Esophagus muscularis mucosa (tissue), 4 donors: ENCODE measurements at regions of chr2 and their contacts with region 1.

Region 1: GRCh38 chr2:168455648-168456520 is at the start of gene CERS6:
- DNase-seq: peak; percentile 98
- H3K4me3 ChIP-seq: peak within 1 kb of the TSS; percentile 77 to 99 (median 79)
- H3K27ac ChIP-seq: peak within 1 kb of the TSS; percentile 81 to 90 (median 88)
- H3K4me1 ChIP-seq: peaks cover 12 to 36% (median 31%) of the 10 kb centered on the region in 4 donors
- H3K27me3 ChIP-seq: no peaks in the 10 kb centered on the region
- CTCF ChIP-seq: peak in 2 of 3 experiments; percentile 3 to 12
- EP300 ChIP-seq: no peak
- POLR2A ChIP-seq: peak; percentile 74
- total RNA-seq, gene CERS6: 46.6 to 67.7 (median 53.6) TPM

Region 2: DNA sequence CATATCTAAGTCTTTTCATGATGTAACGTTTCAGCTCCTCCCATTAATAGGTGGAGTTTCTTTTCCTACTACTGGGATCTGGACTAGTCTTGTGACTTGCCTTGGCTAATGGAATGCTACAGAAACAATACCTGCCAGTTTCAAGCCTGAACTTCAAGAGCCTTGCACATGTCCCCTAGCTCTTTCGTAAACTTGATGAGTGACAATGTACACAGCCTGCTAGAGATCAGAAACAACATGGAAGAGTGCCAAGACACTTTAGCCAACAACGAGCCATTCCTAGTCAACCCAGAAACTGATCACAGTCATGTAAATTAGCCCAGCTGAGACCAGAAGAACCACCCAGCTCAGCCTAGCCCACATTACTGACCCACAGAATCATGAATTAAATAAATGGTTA is 183.7 kb before region 1 on chr2:
- intact Hi-C with region 1: no loop called
- DNase-seq: no peak
- H3K4me3 ChIP-seq: no peak overlapping the region
- H3K27ac ChIP-seq: no peak overlapping the region
- H3K4me1 ChIP-seq: no peaks in the 10 kb centered on the region
- H3K27me3 ChIP-seq: no peaks in the 10 kb centered on the region
- CTCF ChIP-seq: no peak
- EP300 ChIP-seq: no peak
- POLR2A ChIP-seq: no peak

Region 3: DNA sequence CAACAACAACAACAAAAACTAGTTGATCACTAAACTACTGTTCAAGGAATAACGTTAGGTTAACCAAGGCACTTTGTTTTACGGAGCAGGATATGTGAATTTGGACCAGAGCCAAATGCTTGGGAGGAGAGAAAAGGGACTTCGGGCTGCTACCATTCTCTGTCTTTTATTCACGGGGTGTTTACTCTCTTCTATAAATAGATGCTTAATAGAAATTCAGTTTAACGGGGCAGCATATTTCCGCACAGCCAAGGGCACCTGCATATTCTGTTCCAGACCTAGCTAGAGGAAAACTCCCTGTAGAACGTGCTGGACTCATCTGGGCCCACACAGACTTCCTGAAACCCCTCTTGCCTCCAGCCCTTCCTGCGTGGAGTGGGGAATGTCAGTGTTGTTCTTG is 172.7 kb before region 1 on chr2:
- intact Hi-C with region 1: no loop called
- DNase-seq: no peak
- H3K4me3 ChIP-seq: no peak overlapping the region
- H3K27ac ChIP-seq: no peak overlapping the region
- H3K4me1 ChIP-seq: peaks cover 0 to 7% (median 6%) of the 10 kb centered on the region in 4 donors
- H3K27me3 ChIP-seq: no peaks in the 10 kb centered on the region
- CTCF ChIP-seq: no peak
- EP300 ChIP-seq: no peak
- POLR2A ChIP-seq: no peak

Region 4: DNA sequence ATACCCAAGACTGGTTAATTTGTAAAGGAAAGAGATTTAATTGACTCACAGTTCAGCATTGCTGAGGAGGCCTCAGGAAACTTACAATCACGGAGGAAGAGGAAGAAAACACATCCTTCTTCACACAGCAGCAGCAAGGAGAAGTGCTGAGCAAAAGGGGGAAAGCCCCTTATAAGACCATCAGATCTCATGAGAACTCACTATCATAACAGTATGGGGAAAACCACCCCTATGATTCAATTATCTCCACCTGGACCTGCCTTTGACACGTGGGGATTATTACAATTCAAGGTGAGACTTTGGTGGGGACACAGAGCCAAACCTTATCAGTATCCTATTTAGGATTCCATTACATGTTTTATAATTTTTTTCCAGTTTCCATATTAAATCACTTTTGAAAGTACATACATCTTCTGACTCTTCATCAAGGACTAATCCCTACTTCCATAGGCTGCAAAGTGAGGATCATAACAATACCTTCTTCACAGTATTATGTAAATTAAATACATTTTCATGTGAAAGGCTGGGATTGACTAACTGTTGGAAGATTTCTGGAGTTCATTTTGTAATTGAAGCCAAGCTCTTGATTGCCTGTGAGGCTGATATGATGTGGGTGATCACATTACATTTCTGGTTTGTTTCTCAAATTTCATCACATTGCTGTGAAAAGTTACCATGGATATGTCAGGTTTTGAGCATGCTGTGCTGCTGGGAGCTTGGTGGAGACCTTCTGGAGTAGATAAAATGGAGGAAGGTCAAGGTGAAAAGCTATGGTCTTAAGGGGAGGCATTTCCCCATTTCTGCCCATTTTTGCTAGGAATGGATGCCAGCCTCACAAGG is 31.6 kb before region 1 on chr2:
- intact Hi-C with region 1: no loop called
- DNase-seq: no peak
- H3K4me3 ChIP-seq: no peak overlapping the region
- H3K27ac ChIP-seq: no peak overlapping the region
- H3K4me1 ChIP-seq: peaks cover 0 to 3% (median 0%) of the 10 kb centered on the region in 4 donors
- H3K27me3 ChIP-seq: no peaks in the 10 kb centered on the region
- CTCF ChIP-seq: no peak
- EP300 ChIP-seq: no peak
- POLR2A ChIP-seq: no peak

Region 5: DNA sequence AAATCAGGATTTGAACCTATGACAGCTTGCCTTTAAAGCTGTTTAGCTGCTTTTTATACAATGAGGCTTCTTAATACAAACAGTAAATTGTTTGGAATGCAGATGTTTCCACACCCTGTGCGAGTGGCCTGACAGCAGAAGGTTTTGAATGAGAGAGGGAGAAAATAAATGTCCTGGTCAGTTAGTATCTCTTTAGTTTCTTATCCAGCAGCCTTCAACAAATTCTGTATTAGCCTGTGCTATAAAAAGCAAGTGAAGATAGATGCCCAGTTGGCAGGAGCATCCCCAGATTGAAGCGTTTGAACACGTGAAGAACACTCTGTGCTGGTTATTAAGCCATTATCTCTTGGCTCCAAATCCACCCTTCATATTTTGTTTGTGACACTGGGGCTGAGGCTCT is 70.8 kb after region 1 on chr2:
- intact Hi-C with region 1: loop called (anchors 5 kb)
- DNase-seq: no peak
- H3K4me3 ChIP-seq: no peak overlapping the region
- H3K27ac ChIP-seq: peak overlapping the region; percentile 72 to 81 (median 75)
- H3K4me1 ChIP-seq: peaks cover 87 to 98% (median 97%) of the 10 kb centered on the region in 4 donors
- H3K27me3 ChIP-seq: no peaks in the 10 kb centered on the region
- CTCF ChIP-seq: no peak
- EP300 ChIP-seq: peak; percentile 76
- POLR2A ChIP-seq: no peak

Region 6: DNA sequence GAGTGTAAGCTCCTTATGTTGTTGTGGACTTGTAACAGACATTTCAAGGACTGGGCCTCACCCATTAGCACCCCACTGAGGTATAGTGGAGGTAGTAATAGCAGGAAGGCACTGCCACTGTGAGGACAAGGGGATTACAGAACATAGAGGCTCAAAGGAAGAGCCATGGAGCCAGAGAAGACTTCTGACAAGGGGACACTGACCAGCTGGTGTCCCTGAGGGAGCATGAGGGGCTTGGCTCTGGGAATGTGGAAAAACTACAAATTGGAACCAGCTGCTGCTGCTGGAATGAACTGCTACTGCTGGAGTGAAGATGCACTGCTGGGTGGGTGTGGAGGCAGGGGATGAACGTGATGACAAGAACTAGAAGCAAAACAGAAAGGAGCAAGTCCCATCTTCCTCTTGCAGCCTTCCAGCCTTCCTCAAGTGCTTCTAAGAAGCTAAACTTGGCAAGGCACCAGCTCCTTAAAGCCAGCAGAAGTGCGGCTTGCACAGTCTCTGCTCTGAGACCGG is 179.2 kb after region 1 on chr2:
- intact Hi-C with region 1: loop called (anchors 5 kb)
- DNase-seq: no peak
- H3K4me3 ChIP-seq: peak overlapping the region in 1 of 4 donors; percentile 5
- H3K27ac ChIP-seq: peak overlapping the region; percentile 78 to 86 (median 82)
- H3K4me1 ChIP-seq: peaks cover 46 to 83% (median 67%) of the 10 kb centered on the region in 4 donors
- H3K27me3 ChIP-seq: no peaks in the 10 kb centered on the region
- CTCF ChIP-seq: no peak
- EP300 ChIP-seq: no peak
- POLR2A ChIP-seq: no peak

Region 7: DNA sequence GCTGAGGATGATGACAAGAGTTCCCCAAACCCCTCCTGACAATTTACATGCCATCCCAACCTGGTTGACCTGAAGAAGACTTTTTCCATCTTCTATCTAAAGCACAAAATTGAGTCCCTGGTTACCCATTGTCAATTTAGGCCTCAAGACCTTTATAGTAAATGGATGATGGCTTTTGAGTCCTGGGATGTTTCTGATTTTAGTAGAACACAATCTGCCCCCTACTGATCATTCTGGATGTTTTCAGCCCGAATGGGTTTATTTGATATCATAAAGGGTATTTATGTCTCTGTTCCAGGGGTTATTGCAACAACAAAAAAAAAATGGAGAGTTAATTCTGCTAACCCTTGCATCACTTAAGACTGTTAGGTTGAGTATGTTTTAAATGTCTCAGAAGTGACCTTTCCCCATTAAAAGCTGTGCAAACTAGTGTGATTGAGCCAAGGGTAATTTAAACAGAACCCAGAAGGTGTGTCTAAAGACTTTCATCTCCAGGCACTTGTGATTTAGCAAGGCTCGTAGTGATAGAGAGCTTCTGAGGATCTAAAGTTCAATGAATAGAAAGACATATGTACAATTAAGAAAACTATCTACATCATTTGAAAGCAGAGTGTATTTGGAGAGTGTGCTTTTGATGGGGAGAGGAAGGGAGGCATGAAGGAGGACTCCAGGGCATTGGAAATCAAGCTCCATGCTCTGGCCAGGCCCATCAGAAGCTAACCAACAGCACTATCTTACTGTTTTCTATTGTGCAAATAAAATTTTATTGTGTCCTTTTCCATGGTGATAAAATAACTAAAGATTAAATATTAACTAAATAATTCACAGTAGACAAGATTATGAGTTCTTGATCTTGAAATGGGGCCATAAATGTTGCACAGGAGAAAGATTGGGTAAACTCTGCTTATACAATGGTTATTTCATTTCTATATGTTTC is 249.9 kb after region 1 on chr2:
- intact Hi-C with region 1: loop called (anchors 10 kb)
- DNase-seq: no peak
- H3K4me3 ChIP-seq: no peak overlapping the region
- H3K27ac ChIP-seq: no peak overlapping the region
- H3K4me1 ChIP-seq: peaks cover 0 to 39% (median 18%) of the 10 kb centered on the region in 4 donors
- H3K27me3 ChIP-seq: no peaks in the 10 kb centered on the region
- CTCF ChIP-seq: peak in 2 of 3 experiments; percentile 17 to 25
- EP300 ChIP-seq: no peak
- POLR2A ChIP-seq: no peak

Region 8: GRCh38 chr2:168758970-168759820 is 303.3 kb after region 1 on chr2:
- intact Hi-C with region 1: loop called (anchors 10 kb)
- DNase-seq: no peak
- H3K4me3 ChIP-seq: no peak overlapping the region
- H3K27ac ChIP-seq: no peak overlapping the region
- H3K4me1 ChIP-seq: peaks cover 0 to 4% (median 4%) of the 10 kb centered on the region in 4 donors
- H3K27me3 ChIP-seq: no peaks in the 10 kb centered on the region
- CTCF ChIP-seq: peak; percentile 57 to 69 (median 62)
- EP300 ChIP-seq: no peak
- POLR2A ChIP-seq: no peak

Region 9: GRCh38 chr2:168816369-168816768 is 360.5 kb after region 1 on chr2:
- intact Hi-C with region 1: no loop called
- DNase-seq: no peak
- H3K4me3 ChIP-seq: no peak overlapping the region
- H3K27ac ChIP-seq: no peak overlapping the region
- H3K4me1 ChIP-seq: peaks cover 0 to 11% (median 0%) of the 10 kb centered on the region in 4 donors
- H3K27me3 ChIP-seq: no peaks in the 10 kb centered on the region
- CTCF ChIP-seq: no peak
- EP300 ChIP-seq: no peak
- POLR2A ChIP-seq: no peak